ENCODE measurements at regions of chr13 and their contacts with region 1.

Region 1: DNA sequence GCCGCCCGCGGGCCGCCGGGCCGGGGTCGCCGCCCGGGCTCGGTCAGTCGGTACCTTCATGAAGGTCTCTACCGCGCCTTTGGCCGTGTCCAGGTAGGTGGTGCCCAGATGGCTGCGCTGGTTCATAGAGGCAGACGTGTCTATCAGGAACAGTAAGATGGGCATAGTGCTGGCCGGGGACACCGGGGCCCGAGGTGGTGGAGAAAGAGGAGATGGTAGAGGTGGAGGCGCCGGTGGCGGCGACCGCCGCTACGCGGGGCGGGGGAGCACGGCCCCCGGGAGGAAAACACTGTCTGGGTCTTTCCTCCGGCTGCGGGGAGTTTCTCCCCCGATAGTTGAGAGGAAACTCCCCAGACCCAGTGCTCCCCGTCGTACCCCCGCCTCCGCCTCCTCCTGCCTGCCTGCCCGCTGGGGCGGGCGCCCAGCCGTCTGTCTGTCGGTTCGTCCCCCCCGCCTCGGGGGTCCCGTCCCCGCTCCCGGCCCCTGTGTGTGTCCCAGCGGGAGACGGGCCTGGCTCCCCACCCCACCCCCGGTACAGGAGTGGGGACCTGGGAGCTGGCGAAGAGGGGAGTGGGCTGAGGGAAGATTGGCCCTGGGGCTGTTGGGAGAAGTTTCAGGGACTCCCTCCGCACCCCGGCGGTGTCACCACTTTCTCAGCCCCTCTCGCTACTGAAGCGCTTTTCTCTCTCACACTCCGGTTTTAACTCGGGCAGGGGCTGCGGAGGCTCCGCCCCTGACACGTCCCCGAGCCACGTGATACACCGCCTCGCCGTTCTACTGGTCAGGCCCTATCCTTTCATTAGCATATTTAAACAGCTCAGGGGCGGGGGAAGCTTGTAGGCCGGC is at the start of gene INTS6:
- DNase-seq: peak; percentile 99
- H3K4me3 Mint-ChIP-seq: peak within 1 kb of the TSS; percentile 91
- H3K27ac Mint-ChIP-seq: peak within 1 kb of the TSS; percentile 94
- H3K4me1 Mint-ChIP-seq: peaks cover 32% of the 10 kb centered on the region
- H3K27me3 Mint-ChIP-seq: no peaks in the 10 kb centered on the region
- total RNA-seq, gene INTS6: 45.5 to 48.9 TPM

Region 2: DNA sequence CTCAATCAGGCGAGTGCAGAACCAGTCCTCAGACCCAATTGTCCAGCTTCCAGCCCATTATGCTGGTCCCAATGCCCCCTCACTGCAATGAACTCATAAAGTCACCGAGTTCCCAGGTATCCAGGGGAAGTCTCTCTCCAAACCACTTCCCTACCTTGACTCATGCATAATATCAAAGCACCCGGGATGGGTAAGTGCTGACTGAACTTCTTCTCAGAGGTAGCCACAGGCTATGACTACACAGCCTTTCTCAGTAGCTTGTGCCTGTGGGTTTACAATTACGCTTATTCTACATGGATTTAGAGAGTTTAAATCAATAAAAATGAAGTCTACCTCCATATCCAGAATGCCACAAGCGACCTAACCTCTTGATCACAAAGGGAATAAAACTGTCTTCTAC is 339.8 kb before region 1 on chr13:
- CTCF ChIA-PET with region 1: no interaction called
- POLR2A ChIA-PET with region 1: no interaction called
- DNase-seq: no peak
- H3K4me3 Mint-ChIP-seq: no peak overlapping the region
- H3K27ac Mint-ChIP-seq: no peak overlapping the region
- H3K4me1 Mint-ChIP-seq: peaks cover 4% of the 10 kb centered on the region
- H3K27me3 Mint-ChIP-seq: peaks cover 7% of the 10 kb centered on the region

Region 3: GRCh38 chr13:51435002-51435578 is 17.5 kb before region 1 on chr13:
- CTCF ChIA-PET with region 1: interaction called, 5 read pairs
- POLR2A ChIA-PET with region 1: interaction called, 40 read pairs
- DNase-seq: no peak
- H3K4me3 Mint-ChIP-seq: no peak overlapping the region
- H3K27ac Mint-ChIP-seq: no peak overlapping the region
- H3K4me1 Mint-ChIP-seq: peaks cover 14% of the 10 kb centered on the region
- H3K27me3 Mint-ChIP-seq: no peaks in the 10 kb centered on the region

Region 4: GRCh38 chr13:51534041-51534817 is 81.6 kb after region 1 on chr13:
- CTCF ChIA-PET with region 1: interaction called, 7 read pairs
- POLR2A ChIA-PET with region 1: interaction called, 46 read pairs
- DNase-seq: peak; percentile 79
- H3K4me3 Mint-ChIP-seq: peak overlapping the region; percentile 50
- H3K27ac Mint-ChIP-seq: peak overlapping the region; percentile 84
- H3K4me1 Mint-ChIP-seq: peaks cover 45% of the 10 kb centered on the region
- H3K27me3 Mint-ChIP-seq: peaks cover under 1% of the 10 kb centered on the region

Region 5: DNA sequence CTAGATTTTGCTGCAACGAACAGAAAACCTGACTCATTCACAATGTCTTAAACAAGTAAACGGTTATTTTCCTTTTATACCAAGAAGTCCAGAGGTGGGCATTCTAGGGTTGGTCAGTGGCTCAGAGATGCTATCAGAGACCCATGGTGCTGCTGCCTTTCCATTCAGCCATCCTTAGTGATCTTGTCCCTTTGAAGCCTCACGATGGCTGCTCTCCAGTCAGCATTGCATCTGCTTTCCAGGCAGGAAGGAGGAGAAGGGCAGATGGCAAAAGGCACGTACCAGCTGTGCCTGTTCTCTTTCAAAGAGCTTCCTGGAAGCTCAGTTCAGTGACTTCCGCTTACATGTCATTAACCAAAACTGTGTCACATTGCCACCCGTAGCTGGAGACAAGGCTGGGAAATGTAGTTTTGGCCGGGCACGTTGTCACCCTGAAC is 161.8 kb after region 1 on chr13:
- CTCF ChIA-PET with region 1: interaction called, 8 read pairs
- POLR2A ChIA-PET with region 1: interaction called, 48 read pairs
- DNase-seq: peak; percentile 62
- H3K4me3 Mint-ChIP-seq: peak overlapping the region; percentile 71
- H3K27ac Mint-ChIP-seq: peak overlapping the region; percentile 90
- H3K4me1 Mint-ChIP-seq: peaks cover 20% of the 10 kb centered on the region
- H3K27me3 Mint-ChIP-seq: no peaks in the 10 kb centered on the region

Region 6: GRCh38 chr13:51764184-51765141 is 311.9 kb after region 1 on chr13:
- CTCF ChIA-PET with region 1: interaction called, 6 read pairs
- POLR2A ChIA-PET with region 1: interaction called, 22 read pairs
- DNase-seq: peak; percentile 55
- H3K4me3 Mint-ChIP-seq: peak overlapping the region; percentile 62
- H3K27ac Mint-ChIP-seq: peak overlapping the region; percentile 80
- H3K4me1 Mint-ChIP-seq: peaks cover 23% of the 10 kb centered on the region
- H3K27me3 Mint-ChIP-seq: no peaks in the 10 kb centered on the region

Region 7: DNA sequence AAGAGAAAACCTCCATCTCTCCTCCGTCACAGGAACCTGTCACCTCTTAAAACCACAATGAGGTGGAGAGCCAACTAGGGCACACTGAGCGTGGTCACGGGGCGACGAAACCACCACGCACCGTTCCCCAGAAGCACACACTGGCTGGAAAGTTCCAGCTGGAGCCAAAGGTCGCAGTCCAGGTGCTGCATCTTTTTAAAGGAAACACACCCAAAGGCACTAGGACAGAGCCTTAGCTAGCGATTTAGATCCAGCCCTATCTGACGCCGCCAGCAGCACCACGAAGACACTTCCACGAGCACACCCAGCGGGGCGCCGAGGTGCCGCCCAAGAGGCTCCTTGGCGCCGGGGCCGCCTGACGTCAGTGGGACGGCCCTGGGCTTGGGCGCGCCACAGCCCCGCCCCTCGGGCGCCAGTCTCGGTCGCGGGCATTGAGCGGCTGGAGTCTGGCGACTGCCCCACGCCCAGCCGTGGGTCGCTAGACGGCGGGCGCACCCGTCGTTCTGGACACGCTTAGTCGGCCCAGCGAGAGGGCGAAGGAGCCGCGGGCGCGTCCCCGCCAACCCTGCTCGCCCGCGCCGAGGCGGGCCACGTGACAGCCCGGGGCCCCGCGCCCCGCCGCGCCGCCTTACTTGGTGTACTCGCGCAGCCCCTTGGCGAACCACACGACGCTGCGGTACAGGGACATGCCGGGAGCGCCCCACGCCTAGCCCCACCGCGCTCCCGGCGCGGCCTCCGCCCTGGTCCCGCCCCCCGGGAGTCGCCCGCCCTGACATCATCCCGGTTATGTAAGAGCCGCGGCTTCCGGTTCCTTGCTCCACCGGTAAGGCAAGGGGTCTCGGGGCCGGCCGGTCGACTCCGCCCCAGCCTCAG is 351.1 kb after region 1 on chr13 and contains the start of gene DHRS12:
- CTCF ChIA-PET with region 1: interaction called, 30 read pairs
- POLR2A ChIA-PET with region 1: interaction called, 82 read pairs
- DNase-seq: peak; percentile 88
- H3K4me3 Mint-ChIP-seq: peak within 1 kb of the TSS; percentile 93
- H3K27ac Mint-ChIP-seq: peak within 1 kb of the TSS; percentile 99
- H3K4me1 Mint-ChIP-seq: peaks cover 36% of the 10 kb centered on the region
- H3K27me3 Mint-ChIP-seq: no peaks in the 10 kb centered on the region
- total RNA-seq, gene DHRS12: 5.0 to 6.4 TPM

Measured in activated CD4-positive, alpha-beta memory T cell treated with anti-CD3 and anti-CD28 coated beads, Interleukin-2, amount 10 ng/mL, durations not matched to agents 7 days and 5 days (primary cell).